Activated CD4-positive, alpha-beta memory T cell treated with anti-CD3 and anti-CD28 coated beads, Interleukin-2, amount 10 ng/mL, durations not matched to agents 7 days and 5 days (primary cell): ENCODE measurements at regions of chr2 and their contacts with region 1.

Region 1: DNA sequence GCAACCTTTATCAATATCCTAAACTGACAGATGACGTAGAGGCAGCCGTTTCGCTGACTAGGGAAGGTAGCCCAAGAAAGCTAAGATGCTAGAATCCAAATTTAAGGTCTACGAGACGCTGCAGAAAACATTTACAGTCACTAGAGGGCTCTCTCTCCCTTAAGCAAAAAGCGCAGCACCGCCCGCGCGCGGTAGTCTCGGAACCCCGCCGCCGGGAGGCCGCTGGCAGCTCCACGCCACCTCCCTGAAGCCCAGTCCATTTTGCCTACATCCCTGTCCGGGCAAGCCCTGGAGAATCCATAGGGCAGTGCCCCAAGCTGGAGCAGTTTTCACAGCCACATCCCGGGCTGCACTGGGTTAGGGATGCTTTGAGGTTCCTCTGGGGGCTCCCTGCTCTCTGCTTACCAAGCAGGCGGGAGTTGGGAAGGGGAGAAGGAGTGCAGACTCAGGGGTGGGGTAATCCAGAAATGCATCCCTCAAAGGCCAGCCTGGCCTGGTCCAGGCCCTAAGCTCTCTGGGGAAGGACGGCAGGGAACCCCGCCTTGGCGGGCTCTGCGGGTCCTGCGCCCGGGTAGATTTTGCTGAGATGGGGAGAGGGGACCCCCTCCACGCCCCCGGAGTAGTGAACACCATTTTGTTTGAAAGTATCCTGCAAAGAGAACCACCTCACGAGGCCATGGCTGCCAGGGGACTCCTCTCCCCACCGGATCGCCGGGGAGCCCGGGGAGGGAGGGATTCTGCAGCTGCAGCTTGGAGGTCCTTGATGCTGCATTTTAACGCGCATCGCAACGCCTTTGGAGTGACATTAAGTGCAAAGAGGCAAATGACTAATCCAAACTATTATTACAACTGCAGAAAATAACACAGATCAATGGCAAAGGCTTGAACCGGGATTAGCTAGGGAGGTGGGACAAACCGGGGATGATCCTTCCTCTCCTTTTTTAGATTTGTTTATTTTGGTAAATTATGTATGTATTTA is 1.3 kb upstream of the DPYSL5 start:
- DNase-seq: peak; percentile 59
- H3K4me3 Mint-ChIP-seq: peak overlapping the region; percentile 21
- H3K27ac Mint-ChIP-seq: no peak overlapping the region
- H3K4me1 Mint-ChIP-seq: peaks cover 7% of the 10 kb centered on the region
- H3K27me3 Mint-ChIP-seq: peaks cover 55% of the 10 kb centered on the region

Region 2: DNA sequence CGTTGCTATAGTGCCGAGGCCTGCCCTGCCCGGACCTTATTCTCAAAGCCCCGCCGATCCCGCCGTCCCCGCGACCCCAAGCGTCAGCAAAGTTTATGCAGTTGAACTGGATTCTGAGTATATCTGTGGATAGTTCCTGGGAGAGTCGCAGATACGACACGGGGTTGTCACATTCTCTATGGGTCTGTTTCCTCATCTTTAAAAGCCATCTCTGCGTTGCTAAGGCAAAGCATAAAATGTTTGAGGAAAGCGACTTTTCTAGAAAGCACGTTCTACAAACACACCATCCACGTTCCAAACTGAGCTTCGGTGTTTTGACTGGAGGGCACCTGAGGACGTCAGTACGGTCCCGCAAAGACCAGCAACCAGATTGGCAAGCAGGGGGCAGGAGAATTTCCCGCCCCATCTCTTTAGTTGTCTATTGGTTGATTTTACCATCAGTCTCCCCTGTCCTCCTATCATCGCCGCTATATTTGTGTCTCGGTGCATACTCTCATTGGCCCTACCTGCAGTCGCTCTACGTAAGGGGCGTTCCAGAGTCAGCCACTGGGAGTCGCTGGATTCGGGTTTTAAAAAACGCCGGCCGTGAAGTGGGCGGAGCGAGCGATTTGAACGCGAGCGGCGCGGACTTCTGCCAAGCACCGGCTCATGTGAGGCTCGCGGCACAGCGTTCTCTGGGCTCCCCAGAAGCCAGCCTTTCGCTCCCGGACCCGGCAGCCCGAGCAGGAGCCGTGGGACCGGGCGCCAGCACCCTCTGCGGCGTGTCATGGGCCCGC is 61.0 kb before region 1 on chr2 and contains the start of gene CENPA:
- CTCF ChIA-PET with region 1: no interaction called
- POLR2A ChIA-PET with region 1: no interaction called
- DNase-seq: peak; percentile 97
- H3K4me3 Mint-ChIP-seq: peak within 1 kb of the TSS; percentile 95
- H3K27ac Mint-ChIP-seq: peak within 1 kb of the TSS; percentile 84
- H3K4me1 Mint-ChIP-seq: peaks cover 40% of the 10 kb centered on the region
- H3K27me3 Mint-ChIP-seq: no peaks in the 10 kb centered on the region
- total RNA-seq, gene CENPA: 39.5 to 43.1 TPM

Region 3: GRCh38 chr2:26922405-26923188 is 76.0 kb after region 1 on chr2:
- CTCF ChIA-PET with region 1: interaction called, 50 read pairs
- POLR2A ChIA-PET with region 1: interaction called, 3 read pairs
- DNase-seq: peak; percentile 31
- H3K4me3 Mint-ChIP-seq: no peak overlapping the region
- H3K27ac Mint-ChIP-seq: no peak overlapping the region
- H3K4me1 Mint-ChIP-seq: peaks cover 2% of the 10 kb centered on the region
- H3K27me3 Mint-ChIP-seq: peaks cover 24% of the 10 kb centered on the region

Region 4: DNA sequence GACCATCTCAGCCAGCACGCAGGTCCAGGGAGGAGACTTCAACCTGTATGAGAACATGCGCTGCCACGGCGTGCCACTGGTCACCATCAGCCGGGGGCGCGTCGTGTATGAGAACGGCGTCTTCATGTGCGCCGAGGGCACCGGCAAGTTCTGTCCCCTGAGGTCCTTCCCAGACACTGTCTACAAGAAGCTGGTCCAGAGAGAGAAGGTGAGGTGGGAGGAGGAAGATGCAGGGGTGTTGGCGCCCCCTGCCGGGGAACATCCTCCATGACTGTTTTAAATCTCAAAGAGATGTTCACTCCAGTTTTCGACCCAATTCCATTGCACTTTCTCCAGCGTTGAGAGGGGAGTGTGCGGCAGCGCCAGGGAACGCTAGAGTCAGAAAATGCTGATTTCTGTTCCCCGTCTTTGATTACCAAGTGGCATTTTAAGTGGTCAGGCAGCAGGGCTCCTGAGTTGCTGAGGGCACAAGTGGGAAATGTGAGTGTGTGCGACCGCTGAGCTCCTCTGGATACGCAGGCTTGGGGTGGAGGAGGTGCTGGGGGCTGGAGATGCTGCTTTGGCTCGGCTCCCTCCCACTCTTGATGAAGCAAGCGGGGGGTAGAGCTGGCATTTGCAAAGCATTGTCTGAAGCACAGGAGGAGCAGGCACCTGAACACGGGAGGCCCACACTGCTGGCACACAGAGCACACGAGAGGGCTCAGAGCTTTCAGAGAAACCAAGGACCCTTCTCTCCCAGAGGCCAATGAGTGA is 96.1 kb after region 1 on chr2:
- CTCF ChIA-PET with region 1: interaction called, 34 read pairs
- POLR2A ChIA-PET with region 1: interaction called, 5 read pairs
- DNase-seq: peak; percentile 67
- H3K4me3 Mint-ChIP-seq: no peak overlapping the region
- H3K27ac Mint-ChIP-seq: no peak overlapping the region
- H3K4me1 Mint-ChIP-seq: no peaks in the 10 kb centered on the region
- H3K27me3 Mint-ChIP-seq: peaks cover 15% of the 10 kb centered on the region

Region 5: DNA sequence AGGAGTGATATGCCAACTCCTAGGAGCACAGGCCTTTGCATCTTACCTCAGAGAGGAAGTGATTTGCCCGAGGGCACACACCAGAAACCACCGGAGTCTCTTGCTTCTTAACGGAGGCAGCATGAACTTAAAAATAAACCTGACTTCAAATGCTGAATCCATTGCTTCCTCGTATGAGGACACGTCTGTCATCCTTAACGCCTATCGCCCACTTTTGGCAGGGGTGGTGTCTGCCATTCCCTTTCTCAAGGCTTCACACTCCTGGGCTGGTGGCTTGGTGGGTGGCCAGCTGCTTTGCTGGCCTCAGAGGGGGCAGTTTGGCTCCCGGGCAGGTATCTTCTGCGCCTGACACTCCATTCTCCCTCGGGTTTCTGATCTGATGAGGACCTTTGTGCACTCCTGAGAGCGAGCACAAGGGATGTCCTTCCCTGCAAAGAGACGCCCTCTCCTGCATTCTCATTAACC is 288.9 kb after region 1 on chr2:
- CTCF ChIA-PET with region 1: no interaction called
- POLR2A ChIA-PET with region 1: no interaction called
- DNase-seq: no peak
- H3K4me3 Mint-ChIP-seq: peak overlapping the region; percentile 96
- H3K27ac Mint-ChIP-seq: no peak overlapping the region
- H3K4me1 Mint-ChIP-seq: peaks cover 34% of the 10 kb centered on the region
- H3K27me3 Mint-ChIP-seq: peaks cover 2% of the 10 kb centered on the region